ENCODE measurements at regions of chr22 and their contacts with region 1.

Region 1: DNA sequence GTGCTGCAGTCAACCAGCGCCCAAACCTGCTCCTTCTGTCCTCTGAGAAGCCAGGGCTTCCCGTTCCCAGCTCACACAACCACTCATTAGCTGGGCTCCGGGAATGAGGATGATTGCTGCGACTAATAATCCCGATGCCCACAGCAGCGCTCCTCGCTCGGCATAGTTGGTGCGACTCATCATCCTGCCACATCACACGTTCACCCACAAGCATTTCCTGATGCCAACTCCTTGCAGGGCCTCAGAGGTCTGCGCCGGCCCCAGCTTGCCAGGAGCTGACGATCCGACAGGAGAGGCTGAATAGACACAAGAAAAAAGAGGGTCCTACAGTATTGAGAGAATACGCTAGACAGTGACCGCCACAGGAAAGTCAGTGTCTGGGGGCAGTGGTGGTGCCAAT is 10.6 kb upstream of the CSNK1E start:
- DNase-seq: no peak
- ATAC-seq: no peak

Region 2: DNA sequence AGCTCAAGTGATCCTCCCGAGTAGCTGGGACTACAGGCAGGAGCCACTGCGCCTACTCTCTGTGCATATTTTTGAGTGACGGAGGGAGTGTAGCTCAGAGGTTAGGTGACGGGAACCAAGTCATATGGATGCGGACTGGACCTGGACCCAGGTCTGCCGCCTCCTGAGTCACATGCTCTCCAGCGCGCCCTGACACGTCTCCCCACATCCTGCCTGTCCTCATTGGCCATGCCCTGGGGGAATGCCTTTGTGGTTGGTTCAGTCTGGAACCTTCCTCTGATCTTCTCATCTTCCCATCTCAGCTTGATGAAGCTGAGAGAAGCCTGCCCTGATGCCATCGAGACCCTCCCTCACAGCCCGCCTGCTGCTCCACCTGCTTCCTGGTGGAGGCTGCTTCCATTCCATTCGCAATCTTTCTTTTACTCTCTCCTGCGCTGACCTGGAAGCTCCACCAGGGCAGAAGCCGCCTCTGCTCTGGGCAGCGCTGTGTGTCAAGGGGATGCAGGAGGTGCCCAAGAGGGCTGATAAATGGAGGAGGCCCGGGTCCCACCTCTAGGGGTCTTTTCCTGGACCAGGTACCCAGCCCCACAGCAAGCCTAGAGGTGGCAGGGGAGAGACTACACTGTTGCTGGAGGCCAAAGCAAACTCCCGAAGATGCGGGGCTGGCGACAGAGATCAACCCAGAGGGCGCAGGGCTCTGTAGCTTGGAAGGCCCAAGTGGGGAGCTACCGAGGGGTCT is 203.4 kb before region 1 on chr22:
- intact Hi-C with region 1: loop called (anchors 5 kb)
- DNase-seq: no peak
- ATAC-seq: no peak

Region 3: DNA sequence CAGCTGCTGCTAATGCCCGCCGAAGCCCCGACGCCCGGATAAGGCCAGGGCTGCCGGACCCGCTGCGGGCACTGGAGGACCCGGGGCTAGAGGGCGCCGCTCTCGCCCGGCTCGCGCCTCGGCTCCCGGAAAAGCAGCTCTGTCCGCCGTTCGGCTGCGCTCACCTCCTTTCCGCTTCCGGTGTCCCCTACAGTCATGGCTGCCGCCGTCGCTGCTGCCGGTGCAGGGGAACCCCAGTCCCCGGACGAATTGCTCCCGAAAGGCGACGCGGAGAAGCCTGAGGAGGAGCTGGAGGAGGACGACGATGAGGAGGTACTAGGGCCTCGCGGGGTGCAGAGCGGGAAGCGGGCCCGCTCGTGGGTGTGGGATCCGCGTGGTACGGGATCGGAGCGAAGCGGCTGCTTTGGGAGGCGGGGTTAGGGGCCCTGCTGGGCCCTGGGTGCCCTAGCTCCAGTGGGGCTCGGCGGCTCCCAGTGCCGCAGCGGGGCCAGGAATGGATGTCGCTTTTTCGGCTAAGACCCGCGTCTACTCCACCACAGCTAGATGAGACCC is 354.1 kb after region 1 on chr22 and contains the start of gene TOMM22:
- intact Hi-C with region 1: no loop called
- DNase-seq: peak; percentile 91
- ATAC-seq: peak; percentile 99
- total RNA-seq, gene TOMM22: 35.3 TPM